ENCODE measurements at regions of chrX and their contacts with region 1.

Region 1: DNA sequence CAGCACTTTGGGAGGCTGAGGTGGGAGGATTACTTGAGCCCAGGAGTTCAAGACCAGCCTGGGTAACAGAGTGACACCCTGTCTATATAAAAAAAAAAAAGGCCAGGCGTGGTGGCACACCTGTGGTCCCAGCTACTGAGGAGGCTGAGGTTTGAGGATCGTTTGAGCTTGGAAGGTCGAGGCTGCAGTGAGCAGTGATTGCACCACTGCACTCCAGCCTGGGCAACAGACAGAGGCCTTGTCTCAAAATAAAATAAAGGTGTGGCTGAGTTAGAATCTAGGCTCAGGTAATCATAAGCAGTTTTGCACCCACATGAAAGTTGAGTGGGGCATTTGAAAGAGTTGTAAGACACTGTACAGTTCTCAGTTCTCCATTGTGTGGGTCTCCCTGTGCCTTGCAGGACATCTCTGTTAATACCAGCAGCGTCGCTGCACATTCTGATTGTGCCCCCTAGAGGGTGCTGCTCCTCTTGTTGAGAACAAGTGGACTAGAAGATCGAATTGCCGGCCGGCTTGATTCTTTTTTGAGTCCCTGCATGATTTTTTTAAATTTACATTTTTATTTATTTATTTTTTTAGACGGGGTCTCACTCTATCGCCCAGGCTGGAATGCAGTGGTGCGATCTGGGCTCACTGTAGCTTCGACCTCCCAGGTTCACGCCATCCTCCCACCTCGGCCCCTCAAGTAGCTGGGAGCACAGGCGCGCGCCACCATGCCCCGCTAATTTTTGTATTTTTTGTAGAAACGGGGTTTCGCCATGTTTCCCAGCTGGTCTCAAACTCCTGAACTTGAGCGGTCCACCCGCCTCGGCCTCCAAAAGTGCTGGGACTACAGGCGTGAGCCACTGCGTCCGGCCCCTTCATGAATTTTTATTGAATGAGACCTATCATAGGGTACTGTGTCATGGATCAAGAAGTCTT is 73.6 kb upstream of the RBMX start:
- DNase-seq: peak; percentile 81
- H3K4me3 ChIP-seq: no peak overlapping the region
- H3K27ac ChIP-seq: no peak overlapping the region
- H3K4me1 ChIP-seq: no peaks in the 10 kb centered on the region
- H3K27me3 ChIP-seq: no peaks in the 10 kb centered on the region

Region 2: DNA sequence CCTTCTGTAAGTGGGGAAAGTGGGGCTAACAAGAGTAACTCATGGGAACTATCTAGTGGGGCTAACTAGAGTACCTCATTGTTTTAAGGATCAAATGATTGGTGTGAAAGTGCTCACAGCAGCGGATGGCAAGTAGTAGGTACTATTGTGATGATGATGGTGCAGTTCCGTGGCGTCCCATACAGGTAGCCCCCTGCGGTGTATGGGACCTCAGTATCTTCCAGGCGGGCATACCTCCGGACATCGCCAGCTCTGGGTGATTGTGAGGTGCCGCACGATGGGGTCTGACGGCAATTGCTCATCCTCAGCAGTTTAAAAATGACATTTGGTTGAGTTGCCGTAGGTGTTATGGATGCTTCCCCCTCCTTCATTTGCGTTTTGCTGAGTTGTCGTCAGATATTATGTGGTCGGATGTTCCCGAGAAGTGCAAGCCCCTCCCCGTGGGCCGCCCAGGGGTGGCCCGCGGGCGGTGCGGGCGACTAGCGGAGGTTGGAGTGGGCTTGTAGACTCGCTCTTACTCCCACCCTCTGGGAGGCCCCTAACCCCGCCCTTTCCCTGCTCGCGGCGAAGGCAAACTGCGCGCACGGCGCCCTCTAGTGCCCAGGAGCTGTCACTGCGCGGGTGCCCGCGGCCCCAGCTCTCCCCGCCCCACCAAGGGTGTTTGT is 98.0 kb after region 1 on chrX:
- in situ Hi-C with region 1: loop called (anchors 10 kb)
- DNase-seq: peak; percentile 55
- H3K4me3 ChIP-seq: peak overlapping the region; percentile 71
- H3K27ac ChIP-seq: no peak overlapping the region
- H3K4me1 ChIP-seq: no peaks in the 10 kb centered on the region
- H3K27me3 ChIP-seq: peaks cover 13% of the 10 kb centered on the region; the same call in 1 of the 2 replicates

Region 3: GRCh38 chrX:137194164-137194563 is 240.0 kb after region 1 on chrX:
- in situ Hi-C with region 1: loop called (anchors 25 kb)
- DNase-seq: peak; percentile 36
- H3K4me3 ChIP-seq: no peak overlapping the region
- H3K27ac ChIP-seq: no peak overlapping the region
- H3K4me1 ChIP-seq: no peaks in the 10 kb centered on the region
- H3K27me3 ChIP-seq: no peaks in the 10 kb centered on the region